Common myeloid progenitor, CD34-positive (primary cell): ENCODE measurements at regions of chr2 and their contacts with region 1.

Region 1: GRCh38 chr2:60674524-60675165 is 81.4 kb upstream of the PAPOLG start:
- DNase-seq: peak; percentile 75 to 87 (median 84)
- H3K4me3 ChIP-seq: no peak overlapping the region
- H3K27ac ChIP-seq: no peak overlapping the region
- H3K4me1 ChIP-seq: peaks cover 3 to 21% (median 14%) of the 10 kb centered on the region in 4 experiments
- H3K27me3 ChIP-seq: no peaks in the 10 kb centered on the region

Region 2: GRCh38 chr2:60560734-60561644 is 113.7 kb before region 1 on chr2:
- CTCF ChIA-PET with region 1: interaction called, 21 read pairs
- POLR2A ChIA-PET with region 1: no interaction called
- DNase-seq: peak in 2 of 3 donors; percentile 76
- H3K4me3 ChIP-seq: no peak overlapping the region
- H3K27ac ChIP-seq: no peak overlapping the region
- H3K4me1 ChIP-seq: peaks cover 6 to 46% (median 24%) of the 10 kb centered on the region in 4 experiments
- H3K27me3 ChIP-seq: no peaks in the 10 kb centered on the region

Region 3: DNA sequence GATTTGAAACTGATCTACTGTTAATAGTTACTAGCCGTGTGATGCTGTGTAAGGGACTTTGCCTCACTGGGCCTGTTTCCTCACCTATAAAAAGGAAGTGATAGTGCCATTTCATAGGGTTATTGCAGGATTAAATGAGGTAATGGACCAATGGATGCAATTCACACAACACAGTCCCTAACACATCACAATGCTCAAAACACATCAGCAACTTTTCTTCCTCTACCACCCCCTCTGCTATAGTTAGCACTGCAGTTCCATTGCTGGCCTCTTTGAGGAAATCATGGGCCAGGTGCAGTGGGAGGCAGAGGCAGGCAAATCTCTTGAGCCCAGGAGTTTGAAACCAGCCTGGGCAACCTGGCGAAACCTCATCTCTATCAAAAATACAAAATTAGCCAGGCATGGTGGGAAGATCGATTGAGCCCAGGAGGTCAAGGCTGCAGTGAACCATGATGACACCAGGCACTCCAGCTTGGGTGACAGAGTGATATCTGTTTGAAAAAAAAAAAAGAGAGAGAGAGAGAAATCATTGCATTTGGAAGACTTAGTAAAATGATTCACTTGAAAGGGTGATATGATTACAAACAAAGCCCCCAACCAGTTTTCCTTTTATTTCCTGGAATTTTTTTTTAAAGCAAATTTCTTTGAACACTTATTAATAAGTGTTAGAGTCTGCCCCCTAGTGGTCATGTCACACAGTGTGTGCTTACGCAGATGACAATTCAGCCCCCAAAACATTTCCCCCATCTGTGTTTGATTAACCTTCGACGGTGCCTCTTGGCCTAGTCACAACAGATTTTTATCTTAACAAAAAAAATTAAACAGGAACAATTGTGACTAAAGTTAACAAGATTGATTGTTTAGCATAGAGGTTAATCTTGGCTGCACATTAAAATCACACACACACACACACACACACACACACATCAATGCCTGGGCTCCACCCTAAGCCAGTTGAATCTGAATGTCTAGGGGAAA is 32.5 kb before region 1 on chr2:
- CTCF ChIA-PET with region 1: interaction called, 11 read pairs
- POLR2A ChIA-PET with region 1: no interaction called
- DNase-seq: peak; percentile 76 to 85 (median 85)
- H3K4me3 ChIP-seq: no peak overlapping the region
- H3K27ac ChIP-seq: no peak overlapping the region
- H3K4me1 ChIP-seq: peaks cover 0 to 2% (median 0%) of the 10 kb centered on the region in 4 experiments
- H3K27me3 ChIP-seq: no peaks in the 10 kb centered on the region

Region 4: DNA sequence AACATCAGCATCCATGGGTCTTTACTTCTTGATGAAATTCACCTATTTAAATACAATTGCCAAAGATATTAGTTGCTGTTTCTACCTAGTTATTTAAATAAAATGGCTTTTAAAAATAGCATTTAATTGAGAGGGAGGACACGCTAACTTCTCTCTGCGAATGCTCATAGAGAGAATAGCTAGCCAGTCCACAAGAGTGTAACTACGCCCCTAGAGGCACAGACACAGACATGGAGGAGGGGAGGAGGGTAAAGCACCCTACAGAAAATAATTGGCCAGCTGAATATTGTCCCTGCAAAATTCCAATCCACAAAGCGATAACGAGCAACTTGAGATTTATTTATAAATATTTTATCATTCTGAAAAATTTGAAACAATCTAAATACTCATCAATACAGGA is 15.6 kb before region 1 on chr2:
- CTCF ChIA-PET with region 1: interaction called, 10 read pairs
- POLR2A ChIA-PET with region 1: no interaction called
- DNase-seq: no peak
- H3K4me3 ChIP-seq: no peak overlapping the region
- H3K27ac ChIP-seq: no peak overlapping the region
- H3K4me1 ChIP-seq: peaks cover 0 to 18% (median 3%) of the 10 kb centered on the region in 4 experiments
- H3K27me3 ChIP-seq: no peaks in the 10 kb centered on the region

Region 5: GRCh38 chr2:60844105-60844504 is 169.5 kb after region 1 on chr2:
- CTCF ChIA-PET with region 1: no interaction called
- POLR2A ChIA-PET with region 1: no interaction called
- DNase-seq: peak in 1 of 3 donors; percentile 15
- H3K4me3 ChIP-seq: no peak overlapping the region
- H3K27ac ChIP-seq: no peak overlapping the region
- H3K4me1 ChIP-seq: peaks cover 4 to 23% (median 15%) of the 10 kb centered on the region in 4 experiments
- H3K27me3 ChIP-seq: no peaks in the 10 kb centered on the region